ENCODE measurements at regions of chr5 and their contacts with region 1.

Region 1: DNA sequence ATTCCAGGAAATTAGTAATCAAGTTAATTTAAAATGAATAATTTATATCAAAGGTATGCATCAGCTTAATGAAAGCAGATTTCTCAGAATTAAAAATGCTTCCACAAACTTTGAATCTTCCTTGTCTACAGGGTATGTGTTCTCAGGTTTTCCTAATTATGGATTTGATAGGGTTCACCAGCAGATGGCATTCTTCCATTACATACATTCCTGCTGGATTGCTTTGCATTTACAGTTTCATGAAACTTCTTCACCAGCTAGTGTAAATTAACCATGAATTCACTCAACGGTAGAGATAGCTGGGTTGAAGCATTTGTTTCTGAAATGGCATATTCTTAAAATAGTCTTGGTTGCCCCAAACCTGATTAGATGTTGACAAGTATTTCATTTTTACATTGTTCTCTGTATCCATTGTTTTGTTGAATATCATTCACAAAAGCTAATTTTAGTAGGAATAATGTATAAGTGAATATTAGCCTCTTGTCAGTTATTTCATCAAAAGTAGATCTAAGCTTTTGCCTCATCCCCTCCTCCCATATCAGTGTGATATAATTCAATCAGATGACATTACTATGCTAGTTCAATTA is 68.7 kb upstream of the WDR41 start:
- DNase-seq: peak; percentile 35
- ATAC-seq: no peak; the same call in 2 of the 3 replicates
- H3K4me3 ChIP-seq: no peak overlapping the region
- H3K27ac ChIP-seq: no peak overlapping the region
- H3K4me1 ChIP-seq: no peaks in the 10 kb centered on the region
- H3K27me3 ChIP-seq: no peaks in the 10 kb centered on the region
- CTCF ChIP-seq: peak; percentile 73
- EP300 ChIP-seq: no peak
- POLR2A ChIP-seq: no peak
- RAD21 ChIP-seq: 0 out of 2 replicates have a peak, but pooled peaks have one; percentile 33

Region 2: GRCh38 chr5:77867194-77867691 is 306.5 kb after region 1 on chr5:
- CTCF ChIA-PET with region 1: no interaction called
- POLR2A ChIA-PET with region 1: no interaction called
- in situ Hi-C with region 1: no loop called
- intact Hi-C with region 1: no loop called
- DNase-seq: no peak
- ATAC-seq: 0 out of 3 replicates have a peak, but pooled peaks have one; percentile 47
- H3K4me3 ChIP-seq: no peak overlapping the region
- H3K27ac ChIP-seq: no peak overlapping the region
- H3K4me1 ChIP-seq: no peaks in the 10 kb centered on the region
- H3K27me3 ChIP-seq: peaks cover 1 to 42% of the 10 kb centered on the region in 2 experiments; a peak in 4 of 5 replicates
- CTCF ChIP-seq: no peak
- EP300 ChIP-seq: no peak
- POLR2A ChIP-seq: no peak
- RAD21 ChIP-seq: no peak

Region 3: DNA sequence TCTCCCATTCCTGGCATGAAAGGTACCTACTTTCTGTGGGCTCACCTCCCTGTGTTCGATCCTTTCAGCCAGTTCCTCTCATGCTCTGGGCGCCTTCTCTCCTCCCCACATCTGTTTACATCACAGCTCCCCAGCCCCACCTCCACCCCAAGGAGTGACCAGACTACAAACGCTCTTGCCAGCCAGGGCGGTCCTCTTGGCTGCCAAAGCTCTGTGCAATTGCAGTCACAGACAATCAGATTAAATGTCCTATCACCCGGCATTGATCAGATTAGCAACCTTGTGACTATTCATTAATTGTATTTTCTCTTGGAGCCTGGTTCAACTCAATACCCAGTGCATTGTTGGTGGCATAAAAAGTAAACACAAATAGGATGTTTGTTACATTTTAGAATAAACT is 426.6 kb after region 1 on chr5:
- CTCF ChIA-PET with region 1: no interaction called
- POLR2A ChIA-PET with region 1: no interaction called
- in situ Hi-C with region 1: loop called (anchors 25 kb)
- intact Hi-C with region 1: loop called (anchors 5 kb)
- DNase-seq: no peak
- ATAC-seq: no peak
- H3K4me3 ChIP-seq: no peak overlapping the region
- H3K27ac ChIP-seq: no peak overlapping the region
- H3K4me1 ChIP-seq: peaks cover 26% of the 10 kb centered on the region
- H3K27me3 ChIP-seq: no peaks in the 10 kb centered on the region
- CTCF ChIP-seq: no peak
- EP300 ChIP-seq: no peak
- POLR2A ChIP-seq: no peak
- RAD21 ChIP-seq: no peak

Region 4: GRCh38 chr5:77993855-77994318 is 433.1 kb after region 1 on chr5:
- CTCF ChIA-PET with region 1: no interaction called
- POLR2A ChIA-PET with region 1: no interaction called
- in situ Hi-C with region 1: loop called (anchors 25 kb)
- intact Hi-C with region 1: loop called (anchors 5 kb)
- DNase-seq: no peak
- ATAC-seq: no peak
- H3K4me3 ChIP-seq: no peak overlapping the region
- H3K27ac ChIP-seq: no peak overlapping the region
- H3K4me1 ChIP-seq: no peaks in the 10 kb centered on the region
- H3K27me3 ChIP-seq: no peaks in the 10 kb centered on the region
- CTCF ChIP-seq: no peak
- EP300 ChIP-seq: no peak
- POLR2A ChIP-seq: no peak
- RAD21 ChIP-seq: no peak

Region 5: GRCh38 chr5:78008356-78008967 is 447.7 kb after region 1 on chr5:
- CTCF ChIA-PET with region 1: interaction called, 3 read pairs
- POLR2A ChIA-PET with region 1: no interaction called
- in situ Hi-C with region 1: no loop called
- intact Hi-C with region 1: loop called (anchors 1 kb)
- DNase-seq: peak; percentile 31
- ATAC-seq: peak; percentile 77
- H3K4me3 ChIP-seq: no peak overlapping the region
- H3K27ac ChIP-seq: no peak overlapping the region
- H3K4me1 ChIP-seq: peaks cover 18% of the 10 kb centered on the region; the same call in 1 of the 2 replicates
- H3K27me3 ChIP-seq: no peaks in the 10 kb centered on the region
- CTCF ChIP-seq: peak; percentile 75
- EP300 ChIP-seq: no peak
- POLR2A ChIP-seq: no peak
- RAD21 ChIP-seq: peak; percentile 55; the same call in 1 of the 2 replicates

Region 6: GRCh38 chr5:78162253-78162862 is 601.6 kb after region 1 on chr5:
- CTCF ChIA-PET with region 1: no interaction called
- POLR2A ChIA-PET with region 1: no interaction called
- in situ Hi-C with region 1: no loop called
- intact Hi-C with region 1: loop called (anchors 5 kb)
- DNase-seq: peak; percentile 13
- ATAC-seq: no peak
- H3K4me3 ChIP-seq: no peak overlapping the region
- H3K27ac ChIP-seq: no peak overlapping the region
- H3K4me1 ChIP-seq: no peaks in the 10 kb centered on the region
- H3K27me3 ChIP-seq: no peaks in the 10 kb centered on the region
- CTCF ChIP-seq: peak; percentile 56
- EP300 ChIP-seq: no peak
- POLR2A ChIP-seq: no peak
- RAD21 ChIP-seq: no peak